Activated T-helper 1 cell treated with anti-CD3 and anti-CD28 coated beads, Interleukin-12 subunit alpha, Interleukin-12 subunit beta, Interleukin-2, Interleukin-4 antibody, amounts not matched to agents 30 ng/mL and 10 ng/mL and 1 ng/mL, durations not matched to agents 14 hours and 24 hours and 36 hours (primary cell): ENCODE measurements at regions of chr2 and their contacts with region 1.

Region 1: DNA sequence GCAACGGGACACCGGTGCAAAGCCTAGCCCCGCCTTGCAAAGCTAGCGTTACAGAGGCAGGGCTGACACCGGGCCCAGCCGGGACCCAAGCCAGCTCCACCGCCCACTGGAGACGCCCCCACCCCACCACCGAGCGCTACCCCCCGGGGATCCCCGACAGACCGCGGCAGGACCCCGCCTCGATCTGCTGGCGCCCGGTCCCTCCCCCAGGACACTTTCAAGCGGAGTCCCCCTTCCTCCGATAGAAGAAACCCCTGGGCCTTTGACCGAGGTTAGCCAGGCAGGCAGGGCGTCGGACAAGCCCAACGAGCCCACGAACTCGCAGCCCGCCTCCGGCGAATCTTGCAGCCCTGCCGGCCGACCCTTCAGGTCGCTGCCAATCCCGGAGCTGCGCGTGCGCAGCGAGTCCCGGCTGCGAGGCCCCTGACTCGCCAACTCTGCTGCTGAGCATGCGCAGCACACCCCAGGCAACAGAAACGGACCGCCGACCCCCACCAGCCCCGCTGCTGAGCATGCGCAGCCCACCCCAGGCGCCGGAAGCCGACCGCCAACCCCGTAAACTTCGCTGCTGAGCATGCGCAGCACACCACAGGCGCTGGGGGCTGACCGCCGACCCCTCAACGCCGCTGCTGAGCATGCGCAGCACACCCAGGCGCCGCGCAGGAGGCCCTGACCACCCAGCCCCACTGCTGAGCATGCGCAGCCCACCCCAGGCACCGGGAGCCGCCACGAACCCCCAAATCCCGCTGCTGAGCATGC is 656 bp downstream of the ADI1 start:
- DNase-seq: peak; percentile 97
- H3K4me3 Mint-ChIP-seq: peak overlapping the region; percentile 94
- H3K27ac Mint-ChIP-seq: peak overlapping the region; percentile 91
- H3K4me1 Mint-ChIP-seq: peaks cover 50% of the 10 kb centered on the region
- H3K27me3 Mint-ChIP-seq: peaks cover 3% of the 10 kb centered on the region

Region 2: GRCh38 chr2:3223080-3223923 is 295.4 kb before region 1 on chr2:
- intact Hi-C with region 1: loop called (anchors 1 kb)
- DNase-seq: peak; percentile 75
- H3K4me3 Mint-ChIP-seq: peak overlapping the region; percentile 40
- H3K27ac Mint-ChIP-seq: peak overlapping the region; percentile 100
- H3K4me1 Mint-ChIP-seq: peaks cover 61% of the 10 kb centered on the region
- H3K27me3 Mint-ChIP-seq: no peaks in the 10 kb centered on the region

Region 3: DNA sequence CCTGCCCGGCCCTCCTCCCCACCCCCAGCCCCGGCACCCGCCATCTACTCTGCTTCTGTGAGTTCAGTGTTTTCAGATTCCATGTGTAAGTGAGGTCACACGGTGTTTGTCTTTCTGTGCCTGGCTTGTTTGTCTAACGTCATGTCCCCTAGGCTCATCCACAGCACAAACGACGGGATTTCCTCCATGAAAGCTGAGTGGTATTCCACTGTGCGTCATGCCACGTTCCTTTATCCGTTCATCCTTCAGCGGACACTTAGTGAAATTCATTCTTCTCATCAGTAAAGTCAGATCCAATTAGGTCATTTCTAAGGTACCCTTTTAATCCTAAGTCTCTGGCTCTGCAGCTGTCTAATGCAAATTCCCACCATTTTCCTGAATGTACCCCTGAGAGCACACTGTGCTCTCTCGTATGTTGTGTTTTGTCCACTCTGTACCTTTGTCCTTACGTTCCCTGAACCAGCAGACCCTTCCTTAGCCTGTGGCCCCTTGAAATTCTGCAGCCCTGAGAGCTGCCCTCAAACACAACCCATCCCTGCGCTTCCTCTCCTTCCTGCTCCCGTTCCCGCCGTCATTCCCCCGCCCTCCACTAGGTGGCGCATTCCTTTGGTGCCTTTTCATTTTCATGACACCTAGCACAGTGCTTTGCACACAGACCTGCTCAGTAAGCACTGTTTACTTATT is 95.0 kb before region 1 on chr2:
- intact Hi-C with region 1: no loop called
- DNase-seq: peak; percentile 54
- H3K4me3 Mint-ChIP-seq: no peak overlapping the region
- H3K27ac Mint-ChIP-seq: peak overlapping the region; percentile 25
- H3K4me1 Mint-ChIP-seq: no peaks in the 10 kb centered on the region
- H3K27me3 Mint-ChIP-seq: no peaks in the 10 kb centered on the region

Region 4: DNA sequence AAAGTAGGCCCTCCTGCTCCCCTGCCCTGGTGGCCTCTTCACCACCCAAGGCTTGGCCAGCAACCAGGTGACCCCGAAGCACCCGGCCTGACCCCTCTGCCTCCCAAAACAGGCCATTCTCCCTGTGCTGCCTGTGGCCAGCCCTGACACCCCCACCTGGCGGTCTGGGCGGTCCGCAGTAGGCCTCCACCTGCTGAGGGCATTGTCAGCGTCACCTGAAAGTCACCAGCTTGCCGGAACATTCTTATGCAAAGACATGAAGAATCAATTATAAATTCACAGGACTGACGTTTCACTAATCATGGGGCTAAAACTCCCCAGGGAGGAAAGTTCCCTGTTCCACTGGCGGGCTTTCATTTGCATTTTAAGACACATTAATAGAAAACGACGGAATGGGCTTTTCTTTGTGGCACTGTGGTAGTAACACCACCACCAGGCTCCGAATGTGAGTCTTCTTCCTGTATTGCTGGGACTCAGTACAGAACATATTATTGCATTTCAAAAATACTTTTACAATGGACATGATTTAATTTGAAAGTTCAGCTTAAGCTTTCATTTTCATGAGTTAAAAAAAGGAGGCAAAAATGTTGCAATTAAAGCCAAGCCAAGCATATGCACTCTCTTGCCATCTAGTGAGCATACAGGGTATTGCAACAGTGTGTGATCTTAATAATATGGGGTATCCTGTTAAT is 56.7 kb before region 1 on chr2:
- intact Hi-C with region 1: loop called (anchors 2 kb)
- DNase-seq: no peak
- H3K4me3 Mint-ChIP-seq: no peak overlapping the region
- H3K27ac Mint-ChIP-seq: no peak overlapping the region
- H3K4me1 Mint-ChIP-seq: peaks cover 7% of the 10 kb centered on the region
- H3K27me3 Mint-ChIP-seq: no peaks in the 10 kb centered on the region

Region 5: GRCh38 chr2:3532941-3533340 is 14.3 kb after region 1 on chr2:
- intact Hi-C with region 1: no loop called
- DNase-seq: no peak
- H3K4me3 Mint-ChIP-seq: no peak overlapping the region
- H3K27ac Mint-ChIP-seq: no peak overlapping the region
- H3K4me1 Mint-ChIP-seq: peaks cover 5% of the 10 kb centered on the region
- H3K27me3 Mint-ChIP-seq: no peaks in the 10 kb centered on the region

Region 6: DNA sequence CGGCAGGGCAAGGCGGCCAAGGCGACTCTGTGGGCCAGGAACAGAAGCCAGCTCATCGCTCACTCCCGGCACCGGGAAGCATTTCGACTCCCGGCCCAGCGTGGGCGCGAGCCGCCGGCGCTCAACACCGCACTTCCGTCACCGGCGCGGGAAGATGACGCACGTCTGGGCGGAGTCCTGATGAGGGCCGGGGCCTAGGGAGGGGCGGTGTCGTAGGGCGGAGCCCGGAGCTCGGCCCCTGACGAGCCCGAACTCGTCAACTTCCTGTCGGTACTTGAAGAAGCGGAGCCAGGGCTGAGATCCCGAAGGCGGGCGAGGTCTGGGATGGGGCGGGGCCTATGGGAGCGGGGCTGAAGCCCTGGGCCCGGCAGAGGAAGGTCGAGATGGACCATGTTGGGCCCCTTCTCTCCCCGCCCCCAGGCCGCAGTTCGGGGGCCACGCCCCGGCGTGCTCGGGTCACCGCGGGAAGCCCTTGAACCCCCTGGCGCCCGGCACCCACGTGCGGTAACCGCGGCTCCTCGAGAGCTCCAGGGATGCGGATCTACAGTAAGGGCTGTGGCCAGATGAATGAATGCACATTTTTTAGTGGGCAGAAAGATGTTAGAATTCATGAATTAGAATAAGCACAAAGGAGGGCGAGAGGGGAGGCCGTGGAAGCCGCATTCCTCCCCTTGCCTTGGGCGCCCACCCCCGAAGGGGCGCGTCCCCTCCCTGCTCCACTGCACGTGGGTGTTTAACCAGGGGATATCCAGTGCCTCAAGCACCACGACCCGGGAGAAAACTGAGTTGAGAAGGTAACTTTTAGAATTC is 39.7 kb after region 1 on chr2 and contains the start of gene RNASEH1:
- intact Hi-C with region 1: loop called (anchors 1 kb)
- DNase-seq: peak; percentile 98
- H3K4me3 Mint-ChIP-seq: peak within 1 kb of the TSS; percentile 93
- H3K27ac Mint-ChIP-seq: peak within 1 kb of the TSS; percentile 97
- H3K4me1 Mint-ChIP-seq: peaks cover 20% of the 10 kb centered on the region
- H3K27me3 Mint-ChIP-seq: no peaks in the 10 kb centered on the region
- total RNA-seq, gene RNASEH1: 30.5 and 31.6 TPM in 2 replicates

Region 7: DNA sequence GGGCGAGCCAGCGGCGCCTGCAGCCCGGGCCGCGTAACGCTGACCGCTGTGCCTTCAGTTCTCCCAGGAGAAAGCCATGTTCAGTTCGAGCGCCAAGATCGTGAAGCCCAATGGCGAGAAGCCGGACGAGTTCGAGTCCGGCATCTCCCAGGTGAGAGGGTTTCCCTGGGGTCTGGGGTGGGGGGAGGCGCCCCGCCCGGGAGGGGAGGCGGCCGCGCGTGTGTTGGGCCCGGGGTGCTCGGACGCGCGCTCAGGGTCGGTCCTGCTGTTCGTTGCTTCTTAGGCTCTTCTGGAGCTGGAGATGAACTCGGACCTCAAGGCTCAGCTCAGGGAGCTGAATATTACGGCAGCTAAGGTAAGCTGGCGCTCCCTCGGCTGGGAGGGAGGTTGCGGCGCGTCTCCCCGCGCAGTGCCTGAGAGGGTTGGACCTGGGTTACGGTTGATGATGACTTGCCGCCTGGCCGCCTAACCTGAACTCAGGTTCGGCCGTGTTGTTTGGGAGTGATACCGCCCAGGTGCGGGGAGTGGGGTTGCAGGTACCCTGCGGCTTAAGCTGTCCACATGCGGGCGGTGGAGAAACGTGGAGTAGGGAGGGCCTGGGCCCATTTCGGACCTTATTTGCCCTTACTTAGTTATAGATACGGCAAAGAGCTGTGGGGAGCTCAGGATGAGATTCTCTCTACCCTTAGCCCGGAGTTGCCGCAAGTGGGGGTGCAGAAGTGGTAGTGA is 57.0 kb after region 1 on chr2:
- intact Hi-C with region 1: loop called (anchors 1 kb)
- DNase-seq: peak; percentile 17
- H3K4me3 Mint-ChIP-seq: peak overlapping the region; percentile 99
- H3K27ac Mint-ChIP-seq: peak overlapping the region; percentile 91
- H3K4me1 Mint-ChIP-seq: peaks cover 54% of the 10 kb centered on the region
- H3K27me3 Mint-ChIP-seq: peaks cover 1% of the 10 kb centered on the region

Region 8: DNA sequence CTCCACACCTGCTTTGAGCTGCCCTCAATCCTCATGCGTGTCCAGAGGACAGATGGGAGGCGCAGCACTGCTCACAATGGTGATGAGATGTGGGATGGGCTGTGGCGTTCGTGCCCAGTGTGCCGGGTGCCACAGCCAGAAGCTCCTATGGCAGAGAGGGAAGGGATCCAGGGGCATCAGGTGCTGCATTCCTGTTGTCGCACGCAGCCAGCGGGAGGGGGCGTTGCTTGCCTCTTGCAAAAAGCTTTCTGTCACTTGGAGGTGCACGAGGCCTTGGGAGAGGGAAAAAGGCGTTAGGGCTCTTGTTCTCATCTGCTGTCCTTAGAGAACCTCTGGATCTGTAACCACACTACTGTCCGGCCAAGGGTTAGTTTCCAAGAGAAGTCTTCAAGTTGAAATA is 110.1 kb after region 1 on chr2:
- intact Hi-C with region 1: no loop called
- DNase-seq: no peak
- H3K4me3 Mint-ChIP-seq: no peak overlapping the region
- H3K27ac Mint-ChIP-seq: no peak overlapping the region
- H3K4me1 Mint-ChIP-seq: no peaks in the 10 kb centered on the region
- H3K27me3 Mint-ChIP-seq: peaks cover 4% of the 10 kb centered on the region